ENCODE measurements at regions of chr12 and their contacts with region 1.

Region 1: GRCh38 chr12:6965026-6965661 is 5.3 kb downstream of the PHB2 start:
- DNase-seq: peak; percentile 85
- ATAC-seq: peak; percentile 61
- H3K4me3 Mint-ChIP-seq: no peak overlapping the region
- H3K27ac Mint-ChIP-seq: peak overlapping the region; percentile 51
- H3K4me1 Mint-ChIP-seq: peaks cover 46% of the 10 kb centered on the region
- H3K27me3 Mint-ChIP-seq: no peaks in the 10 kb centered on the region

Region 2: DNA sequence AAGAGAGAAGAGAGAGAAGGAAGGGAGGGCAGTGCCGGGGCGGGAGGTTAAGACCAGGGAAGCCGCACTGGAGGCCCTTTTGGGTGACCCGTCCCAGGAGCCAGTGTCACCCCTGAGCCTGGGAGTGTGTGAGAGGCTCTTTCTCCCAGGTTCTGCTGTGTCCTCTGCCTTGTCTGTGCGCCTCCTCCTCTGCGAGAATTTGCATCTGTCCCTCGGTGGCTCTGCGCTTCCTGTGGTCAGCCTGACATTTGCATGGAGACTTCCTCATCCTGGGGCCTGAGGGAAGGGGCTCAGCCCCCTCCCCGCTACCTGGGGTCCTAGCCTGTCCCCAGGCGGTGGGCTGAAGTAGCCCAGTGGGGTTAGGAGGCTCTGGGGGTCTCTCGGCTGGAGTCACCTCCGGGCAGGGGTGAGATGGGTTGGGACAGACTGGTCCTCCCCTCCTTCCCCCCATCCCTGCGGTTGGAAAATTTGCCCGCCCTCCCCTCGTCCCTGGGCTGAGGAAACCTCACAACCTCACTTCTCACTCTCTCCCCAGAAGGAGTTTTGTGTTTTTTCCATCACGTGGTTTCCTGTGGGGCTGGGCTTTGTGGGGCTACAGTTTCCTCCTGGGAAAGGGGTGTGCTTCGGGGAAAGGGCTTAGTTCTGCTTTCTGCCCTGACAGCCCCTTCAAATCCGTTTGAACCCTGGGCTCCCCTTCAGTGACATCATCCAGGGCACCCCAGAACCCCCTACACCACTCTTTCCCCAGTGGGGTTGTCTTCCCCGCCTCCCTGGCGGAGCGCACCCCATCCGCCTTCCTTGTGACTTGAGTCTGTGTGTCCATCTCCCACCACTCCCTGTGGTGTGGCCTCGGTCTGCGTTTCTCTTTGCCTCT is 11.5 kb before region 1 on chr12:
- POLR2A ChIA-PET with region 1: interaction called, 1,055 read pairs
- DNase-seq: peak; percentile 78
- ATAC-seq: peak; percentile 23
- H3K4me3 Mint-ChIP-seq: peak overlapping the region; percentile 100
- H3K27ac Mint-ChIP-seq: peak overlapping the region; percentile 100
- H3K4me1 Mint-ChIP-seq: peaks cover 72% of the 10 kb centered on the region
- H3K27me3 Mint-ChIP-seq: no peaks in the 10 kb centered on the region

Region 3: GRCh38 chr12:7075939-7076338 is 110.8 kb after region 1 on chr12:
- POLR2A ChIA-PET with region 1: no interaction called
- DNase-seq: no peak
- ATAC-seq: no peak
- H3K4me3 Mint-ChIP-seq: no peak overlapping the region
- H3K27ac Mint-ChIP-seq: no peak overlapping the region
- H3K4me1 Mint-ChIP-seq: peaks cover 7% of the 10 kb centered on the region
- H3K27me3 Mint-ChIP-seq: peaks cover 38% of the 10 kb centered on the region